Activated naive CD4-positive, alpha-beta T cell treated with anti-CD3 and anti-CD28 coated beads for 36 hours (primary cell): ENCODE measurements at regions of chr6 and their contacts with region 1.

Region 1: DNA sequence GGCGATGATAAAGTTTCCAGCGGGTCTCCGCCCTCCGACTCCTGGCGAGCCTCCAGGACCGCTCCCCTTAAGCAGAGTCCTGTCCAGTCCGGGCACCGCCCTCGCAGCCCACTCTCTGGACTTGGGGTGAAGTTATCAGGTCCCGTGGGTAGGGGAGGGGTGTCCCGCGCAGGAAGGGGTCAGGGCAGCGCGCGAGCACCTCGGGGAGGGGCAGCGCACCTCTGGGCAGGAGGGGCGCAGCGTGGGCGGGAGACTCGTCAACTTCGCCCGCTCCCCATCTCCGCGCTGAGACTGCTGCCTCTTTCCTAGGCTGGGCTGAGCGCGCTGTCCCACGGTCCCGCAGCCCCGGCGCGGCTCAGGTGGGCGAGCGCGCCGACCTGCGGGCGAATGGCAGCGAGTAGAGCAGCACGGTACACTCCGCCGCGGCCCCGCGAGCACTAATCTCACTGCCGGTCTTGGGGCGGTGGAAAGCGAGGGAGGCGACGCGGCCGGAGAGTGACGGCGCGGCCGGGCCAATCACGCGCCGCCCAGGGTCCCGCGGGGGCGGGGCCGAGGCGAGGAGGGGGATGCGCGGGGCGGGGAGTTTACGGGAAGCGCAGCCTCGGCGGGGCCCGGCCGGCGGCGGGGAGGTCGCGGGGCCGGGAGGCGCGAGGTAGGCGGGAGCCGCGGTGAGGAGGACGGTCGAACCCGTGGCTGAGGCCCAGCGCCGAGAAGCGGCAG is at the start of gene MAN1A1:
- DNase-seq: peak; percentile 88
- H3K4me3 Mint-ChIP-seq: peak within 1 kb of the TSS; percentile 84
- H3K27ac Mint-ChIP-seq: peak within 1 kb of the TSS; percentile 96
- H3K4me1 Mint-ChIP-seq: peaks cover 37% of the 10 kb centered on the region
- H3K27me3 Mint-ChIP-seq: no peaks in the 10 kb centered on the region
- total RNA-seq, gene MAN1A1: 14.8 to 15.1 TPM

Region 2: DNA sequence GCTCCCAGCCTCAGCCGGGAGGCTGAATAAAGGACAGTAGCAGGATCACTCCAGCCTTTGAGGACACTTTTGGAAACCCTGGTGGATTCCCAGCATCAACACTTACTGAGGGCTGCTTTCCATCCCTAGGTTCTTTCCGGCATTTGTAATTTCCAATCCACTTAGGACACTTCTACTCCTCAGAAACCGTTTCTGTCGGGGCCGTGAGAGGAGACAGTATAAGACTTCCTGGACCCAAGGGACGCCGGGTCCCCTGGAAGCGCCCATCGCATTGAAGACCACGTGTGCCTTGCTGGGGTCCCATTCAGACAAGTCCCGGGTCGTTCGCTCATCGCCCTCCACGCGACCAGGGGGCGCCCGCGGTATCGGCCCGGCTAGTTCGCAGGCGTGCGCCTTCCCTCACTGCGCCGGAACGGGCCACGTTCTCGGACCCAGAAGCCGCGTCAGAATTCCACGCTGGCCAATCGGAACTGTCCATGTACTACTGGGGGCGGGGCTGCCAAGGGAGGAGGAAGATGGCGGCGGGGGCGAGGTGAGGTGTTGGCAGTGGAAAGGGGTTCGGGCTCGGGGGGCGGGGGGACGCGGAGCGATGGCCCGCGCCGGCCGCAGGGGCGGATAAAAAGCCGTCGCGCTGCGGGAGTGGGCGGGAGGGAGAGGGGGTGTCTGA is 1674.4 kb before region 1 on chr6 and contains the start of gene NUS1:
- CTCF ChIA-PET with region 1: no interaction called
- intact Hi-C with region 1: loop called (anchors 10 kb)
- DNase-seq: peak; percentile 98
- H3K4me3 Mint-ChIP-seq: peak within 1 kb of the TSS; percentile 94
- H3K27ac Mint-ChIP-seq: peak within 1 kb of the TSS; percentile 93
- H3K4me1 Mint-ChIP-seq: peaks cover 46% of the 10 kb centered on the region
- H3K27me3 Mint-ChIP-seq: no peaks in the 10 kb centered on the region
- total RNA-seq, gene NUS1: 24.0 to 24.1 TPM

Region 3: DNA sequence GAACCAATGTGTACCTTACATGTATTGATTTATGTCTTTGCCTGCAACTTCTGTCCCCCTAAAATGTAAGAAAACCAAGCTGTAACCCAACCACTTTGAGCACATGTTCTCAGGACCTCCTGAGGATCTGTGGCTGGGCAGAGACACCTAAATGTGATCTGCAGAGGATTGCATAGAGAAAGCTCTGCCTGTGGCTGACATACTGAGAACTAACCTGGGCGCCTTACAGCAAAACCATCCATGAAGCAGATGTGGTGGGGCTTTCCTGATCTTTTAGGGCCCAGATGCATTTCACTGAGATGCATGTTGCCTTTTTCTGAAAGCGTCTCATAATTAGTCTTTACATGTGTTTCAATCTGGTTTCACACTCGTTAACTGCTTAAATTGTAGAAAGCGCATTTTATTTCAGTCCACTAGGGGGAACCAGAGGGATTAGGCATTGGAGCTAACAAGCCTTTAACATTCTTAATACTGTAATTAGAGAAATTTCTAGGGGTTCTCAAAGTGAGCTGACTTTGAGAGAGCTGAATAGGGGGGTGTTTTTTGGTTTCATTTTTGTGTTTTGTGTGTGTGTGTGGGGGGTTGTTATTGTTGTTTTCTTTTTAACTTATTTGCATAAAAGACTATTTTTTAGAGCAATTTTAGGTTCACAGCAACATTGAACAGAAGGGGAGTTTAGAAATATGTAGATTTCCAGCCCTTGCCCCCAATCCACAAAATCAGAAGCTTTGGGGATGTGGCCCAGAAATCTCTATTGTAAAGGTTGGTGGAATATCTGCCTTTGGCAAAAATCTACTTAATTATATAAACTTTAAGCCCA is 220.1 kb before region 1 on chr6:
- CTCF ChIA-PET with region 1: interaction called, 4 read pairs
- intact Hi-C with region 1: loop called (anchors 1 kb)
- DNase-seq: no peak
- H3K4me3 Mint-ChIP-seq: no peak overlapping the region
- H3K27ac Mint-ChIP-seq: no peak overlapping the region
- H3K4me1 Mint-ChIP-seq: peaks cover 5% of the 10 kb centered on the region
- H3K27me3 Mint-ChIP-seq: no peaks in the 10 kb centered on the region

Region 4: DNA sequence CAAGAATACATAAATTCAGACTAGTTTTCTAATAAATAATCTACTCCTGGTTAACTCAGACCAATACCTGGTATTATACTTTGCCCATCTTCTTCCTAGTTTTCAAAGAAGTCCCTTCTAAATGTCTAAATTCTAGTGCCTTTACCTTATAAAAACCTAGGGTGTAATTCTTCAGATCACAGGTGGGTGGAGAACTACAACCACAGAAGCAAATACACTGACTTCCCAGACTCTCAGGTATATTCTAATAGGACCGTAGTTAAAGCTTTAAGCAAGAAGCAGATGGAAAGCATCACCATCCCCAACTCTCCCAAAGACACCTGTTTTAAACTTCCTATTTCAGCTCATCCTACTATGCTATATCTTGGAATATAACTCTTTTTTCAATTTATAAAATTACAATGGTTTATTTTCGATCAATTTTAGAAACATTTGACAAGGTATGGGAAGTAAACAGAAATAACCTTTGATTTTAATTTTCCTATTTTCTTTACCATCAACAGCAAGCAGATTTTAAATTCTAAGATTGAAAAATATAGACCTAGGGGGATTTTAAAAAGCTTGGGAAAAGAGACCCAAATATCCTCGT is 15.7 kb before region 1 on chr6:
- CTCF ChIA-PET with region 1: interaction called, 12 read pairs
- intact Hi-C with region 1: loop called (anchors 1 kb)
- DNase-seq: no peak
- H3K4me3 Mint-ChIP-seq: no peak overlapping the region
- H3K27ac Mint-ChIP-seq: no peak overlapping the region
- H3K4me1 Mint-ChIP-seq: peaks cover 19% of the 10 kb centered on the region
- H3K27me3 Mint-ChIP-seq: no peaks in the 10 kb centered on the region

Region 5: GRCh38 chr6:119368951-119369350 is 19.5 kb after region 1 on chr6:
- CTCF ChIA-PET with region 1: no interaction called
- intact Hi-C with region 1: no loop called
- DNase-seq: no peak
- H3K4me3 Mint-ChIP-seq: no peak overlapping the region
- H3K27ac Mint-ChIP-seq: no peak overlapping the region
- H3K4me1 Mint-ChIP-seq: no peaks in the 10 kb centered on the region
- H3K27me3 Mint-ChIP-seq: no peaks in the 10 kb centered on the region

Region 6: DNA sequence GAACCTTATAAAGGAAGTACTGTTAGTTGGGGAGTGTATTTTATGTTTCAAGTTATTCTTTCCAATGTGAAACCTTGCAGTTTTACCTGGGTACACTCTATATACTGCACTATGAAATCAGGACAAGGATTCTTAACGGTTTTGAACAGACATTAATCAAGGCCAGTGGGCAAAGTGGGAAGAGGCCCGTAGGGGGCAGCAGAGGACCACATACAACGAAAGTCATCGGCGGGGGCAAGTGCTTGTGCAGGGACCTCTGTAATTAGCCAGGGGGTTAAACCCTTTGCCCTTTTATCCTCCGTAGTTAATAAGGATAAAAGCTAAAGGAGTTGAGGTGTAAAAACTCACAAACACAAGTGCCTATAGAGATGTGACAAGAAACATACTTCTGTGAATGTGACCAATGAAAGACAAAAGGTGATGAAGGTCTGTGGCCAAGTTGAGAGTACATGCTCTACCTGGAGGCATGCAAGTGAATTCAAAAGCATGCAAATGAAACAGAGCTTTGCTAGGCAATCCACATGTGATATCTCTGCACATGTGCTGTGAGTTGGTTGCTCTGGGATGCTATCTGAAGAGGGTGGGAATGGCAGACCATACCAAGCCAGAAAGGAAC is 392.8 kb after region 1 on chr6:
- CTCF ChIA-PET with region 1: interaction called, 3 read pairs
- intact Hi-C with region 1: loop called (anchors 2 kb)
- DNase-seq: peak; percentile 72
- H3K4me3 Mint-ChIP-seq: no peak overlapping the region
- H3K27ac Mint-ChIP-seq: no peak overlapping the region
- H3K4me1 Mint-ChIP-seq: no peaks in the 10 kb centered on the region
- H3K27me3 Mint-ChIP-seq: no peaks in the 10 kb centered on the region

Region 7: GRCh38 chr6:120056085-120056484 is 706.6 kb after region 1 on chr6:
- CTCF ChIA-PET with region 1: no interaction called
- intact Hi-C with region 1: loop called (anchors 2 kb)
- DNase-seq: peak; percentile 13
- H3K4me3 Mint-ChIP-seq: no peak overlapping the region
- H3K27ac Mint-ChIP-seq: no peak overlapping the region
- H3K4me1 Mint-ChIP-seq: no peaks in the 10 kb centered on the region
- H3K27me3 Mint-ChIP-seq: peaks cover 2% of the 10 kb centered on the region